AG04449 (cell line): ENCODE measurements at regions of chr15 and their contacts with region 1.

Region 1: DNA sequence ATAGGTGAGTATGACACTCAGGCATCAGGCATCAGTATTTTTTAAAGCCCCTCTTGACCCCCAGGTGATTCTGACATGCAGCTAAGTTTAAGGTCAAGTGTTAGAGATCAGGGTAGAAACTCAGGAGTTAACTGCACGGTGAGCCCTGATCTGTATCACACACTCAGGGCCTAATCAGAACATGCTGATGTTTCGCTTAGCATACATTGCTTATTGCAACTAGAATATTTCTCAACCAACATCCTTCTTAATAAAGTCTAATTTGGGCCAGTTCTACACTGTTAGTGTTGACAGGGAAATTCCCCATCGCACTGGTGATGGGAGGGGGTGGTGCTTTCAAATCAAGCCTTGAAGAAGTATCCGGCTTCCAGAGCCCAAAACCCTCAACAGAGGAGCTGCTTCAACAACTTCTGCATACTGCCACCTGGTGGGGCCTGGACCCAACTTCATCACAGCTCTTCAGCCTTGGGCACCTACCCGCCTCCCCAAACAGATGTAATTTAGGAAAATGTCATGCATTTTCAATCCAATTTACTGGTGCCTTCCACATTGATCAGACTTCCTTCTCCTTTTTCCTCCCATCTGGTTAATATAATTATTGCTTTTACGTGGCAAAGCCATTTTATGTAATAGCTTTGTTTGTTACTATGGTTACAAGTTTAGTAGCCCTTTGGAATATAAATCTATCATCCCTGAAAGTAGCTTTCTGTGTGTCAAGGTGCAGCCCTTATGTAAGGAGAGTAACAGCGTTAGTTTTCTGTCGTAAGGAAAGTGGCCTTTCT is 312.2 kb downstream of the RORA start:
- DNase-seq: peak; percentile 44
- H3K4me3 ChIP-seq: no peak overlapping the region
- CTCF ChIP-seq: peak; percentile 81

Region 2: DNA sequence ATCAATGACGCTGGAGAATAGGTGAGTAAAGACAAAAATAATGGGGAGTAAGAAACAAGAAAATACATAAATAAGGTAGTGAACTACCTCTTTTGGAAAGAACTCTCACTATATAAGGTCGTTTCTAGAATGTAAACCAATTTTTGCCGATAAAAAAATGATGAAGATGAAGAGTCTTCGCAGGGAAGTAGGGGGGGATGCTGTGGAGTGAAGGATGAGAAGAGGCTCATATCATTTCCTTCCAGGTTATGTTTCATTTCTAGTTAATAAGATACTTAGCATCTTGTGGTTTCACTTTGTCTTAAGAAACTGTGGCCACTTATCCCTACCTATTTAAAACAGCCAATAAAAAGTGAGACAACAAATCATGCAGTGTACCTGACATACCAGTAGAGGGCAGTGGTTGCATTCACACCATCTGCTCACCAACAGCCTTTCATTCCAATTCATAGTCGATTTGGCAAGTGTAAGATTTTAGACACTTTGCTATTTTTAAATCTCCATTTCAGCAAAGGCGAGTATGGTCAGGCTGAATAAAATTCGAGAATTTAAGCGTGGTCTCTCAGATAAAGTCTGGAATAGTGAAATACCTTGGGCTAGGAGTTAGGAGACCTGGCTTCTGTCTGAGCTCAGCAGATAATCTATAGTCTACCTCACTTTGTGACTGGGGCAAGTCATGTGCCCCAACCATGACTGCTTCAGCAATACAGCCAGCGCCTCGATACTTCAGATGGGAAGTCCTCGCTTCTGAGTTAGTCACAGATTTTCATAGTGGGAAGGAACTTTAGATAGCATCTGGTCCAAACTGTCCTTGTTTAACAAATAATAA is 409.1 kb before region 1 on chr15:
- CTCF ChIA-PET with region 1: interaction called, 15 read pairs
- POLR2A ChIA-PET with region 1: no interaction called
- DNase-seq: peak; percentile 24
- H3K4me3 ChIP-seq: no peak overlapping the region
- CTCF ChIP-seq: peak; percentile 78

Region 3: GRCh38 chr15:60592371-60593169 is 324.3 kb before region 1 on chr15:
- CTCF ChIA-PET with region 1: interaction called, 314 read pairs
- POLR2A ChIA-PET with region 1: no interaction called
- DNase-seq: no peak
- H3K4me3 ChIP-seq: peak overlapping the region; percentile 64
- CTCF ChIP-seq: peak; percentile 19

Region 4: DNA sequence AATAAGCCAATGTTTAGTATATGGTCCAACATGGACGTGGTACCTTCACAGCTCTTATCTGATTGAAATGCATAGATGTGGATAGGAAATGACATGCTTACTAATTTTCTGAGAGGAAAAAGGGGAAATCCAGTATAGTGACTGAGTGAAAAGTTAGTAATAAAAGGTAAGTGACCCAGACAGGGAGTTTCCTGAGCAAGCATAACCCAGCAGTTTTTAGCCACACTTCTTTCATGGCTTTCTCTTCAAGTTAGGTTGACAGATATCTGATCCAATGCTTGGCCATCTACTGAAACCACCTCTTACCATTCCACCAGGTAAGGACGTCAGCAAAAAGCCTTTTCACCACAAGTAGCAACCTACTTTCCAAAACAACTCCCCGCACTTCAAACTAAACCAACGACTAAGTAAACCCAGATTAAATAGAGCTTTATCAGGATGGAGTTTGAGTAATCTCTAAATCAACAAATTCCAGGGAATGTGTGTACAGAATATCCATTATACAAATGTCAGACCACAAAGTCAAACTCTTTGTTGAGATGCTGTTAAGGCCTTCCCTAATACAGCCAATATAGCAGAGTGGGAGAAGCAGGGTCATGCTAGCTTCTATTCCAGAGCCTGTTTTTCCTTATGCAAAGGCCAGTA is 17.4 kb before region 1 on chr15:
- CTCF ChIA-PET with region 1: interaction called, 69 read pairs
- POLR2A ChIA-PET with region 1: no interaction called
- DNase-seq: no peak
- H3K4me3 ChIP-seq: no peak overlapping the region
- CTCF ChIP-seq: no peak

Region 5: GRCh38 chr15:60905587-60905986 is 11.3 kb before region 1 on chr15:
- CTCF ChIA-PET with region 1: interaction called, 69 read pairs
- POLR2A ChIA-PET with region 1: no interaction called
- DNase-seq: no peak
- H3K4me3 ChIP-seq: no peak overlapping the region
- CTCF ChIP-seq: no peak

Region 6: GRCh38 chr15:60932051-60932915 is 15.4 kb after region 1 on chr15:
- CTCF ChIA-PET with region 1: interaction called, 122 read pairs
- POLR2A ChIA-PET with region 1: no interaction called
- DNase-seq: peak; percentile 21
- H3K4me3 ChIP-seq: no peak overlapping the region
- CTCF ChIP-seq: no peak

Region 7: DNA sequence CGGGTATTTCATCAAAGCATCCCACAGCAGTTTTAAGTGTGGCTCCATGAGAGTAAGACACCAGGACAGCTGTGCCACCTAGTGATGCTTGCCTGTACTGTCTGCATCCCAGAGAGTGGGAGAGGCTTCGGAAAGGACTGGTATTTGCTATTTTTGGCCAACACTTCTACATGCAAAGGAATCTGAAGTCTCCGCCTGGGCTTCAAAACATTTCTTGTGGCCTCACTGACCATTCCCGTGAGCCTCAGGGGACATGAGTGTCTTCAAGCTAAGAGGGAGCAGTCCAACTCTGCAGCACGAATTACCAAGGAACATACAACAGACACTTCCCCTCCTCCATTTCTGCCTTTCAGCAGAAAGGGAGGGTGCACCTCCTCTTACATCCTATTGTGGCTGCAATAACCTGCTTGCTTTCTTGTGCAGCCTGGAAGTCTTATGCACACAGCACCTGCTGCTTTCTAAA is 134.7 kb after region 1 on chr15:
- CTCF ChIA-PET with region 1: interaction called, 27 read pairs
- POLR2A ChIA-PET with region 1: no interaction called
- DNase-seq: peak; percentile 67
- H3K4me3 ChIP-seq: no peak overlapping the region
- CTCF ChIP-seq: peak; percentile 81

Region 8: GRCh38 chr15:62165104-62165792 is 1248.4 kb after region 1 on chr15 and contains the start of gene C2CD4B:
- CTCF ChIA-PET with region 1: no interaction called
- POLR2A ChIA-PET with region 1: no interaction called
- DNase-seq: no peak
- H3K4me3 ChIP-seq: peak within 1 kb of the TSS; percentile 12
- CTCF ChIP-seq: no peak